Right ventricle myocardium superior (tissue), 1 donor: ENCODE measurements at regions of chr5 and their contacts with region 1.

Region 1: DNA sequence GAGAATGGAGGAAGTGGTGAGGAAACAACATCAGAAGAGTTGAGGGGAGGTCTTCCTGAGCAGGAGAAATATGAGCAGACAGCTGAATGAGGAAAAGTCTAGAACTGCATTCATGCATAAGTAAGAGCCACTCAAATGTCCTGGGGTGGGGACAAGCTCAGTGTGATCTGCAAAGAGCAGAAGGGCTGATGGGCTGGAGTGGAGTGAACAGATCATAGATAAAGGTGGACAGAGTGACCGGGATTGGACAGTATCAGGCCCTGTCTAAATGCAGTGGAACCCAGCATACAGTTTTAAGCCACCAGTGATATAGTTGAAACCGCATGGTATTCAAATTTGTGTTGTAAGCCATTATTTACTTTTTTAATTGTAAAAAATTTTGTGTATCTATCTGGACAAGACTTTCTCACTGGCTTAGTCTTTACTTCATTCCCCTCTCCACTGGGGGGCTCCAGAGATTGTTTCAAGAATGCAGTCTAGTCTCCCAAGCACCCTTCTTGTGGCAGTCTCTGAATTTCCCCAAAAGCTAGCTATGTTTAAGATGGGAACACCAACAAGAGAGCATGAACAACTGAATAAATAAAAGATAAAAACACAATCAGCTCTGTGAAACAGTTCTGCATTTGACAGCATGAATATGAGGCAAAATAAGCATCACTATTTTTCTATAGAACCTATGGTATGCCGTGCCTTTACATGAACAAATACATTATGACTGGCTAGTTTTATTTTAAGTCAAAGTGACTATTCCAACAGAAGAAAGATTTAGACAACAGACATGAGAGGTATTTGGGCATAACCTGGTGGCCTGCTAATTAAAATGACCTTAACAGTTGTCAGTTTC is 10.7 kb upstream of the STK32A start:
- DNase-seq: no peak
- ATAC-seq: peak; percentile 85

Region 2: GRCh38 chr5:147369742-147370374 is 145.7 kb after region 1 on chr5:
- intact Hi-C with region 1: loop called (anchors 2 kb)
- DNase-seq: no peak
- ATAC-seq: peak; percentile 60

Region 3: DNA sequence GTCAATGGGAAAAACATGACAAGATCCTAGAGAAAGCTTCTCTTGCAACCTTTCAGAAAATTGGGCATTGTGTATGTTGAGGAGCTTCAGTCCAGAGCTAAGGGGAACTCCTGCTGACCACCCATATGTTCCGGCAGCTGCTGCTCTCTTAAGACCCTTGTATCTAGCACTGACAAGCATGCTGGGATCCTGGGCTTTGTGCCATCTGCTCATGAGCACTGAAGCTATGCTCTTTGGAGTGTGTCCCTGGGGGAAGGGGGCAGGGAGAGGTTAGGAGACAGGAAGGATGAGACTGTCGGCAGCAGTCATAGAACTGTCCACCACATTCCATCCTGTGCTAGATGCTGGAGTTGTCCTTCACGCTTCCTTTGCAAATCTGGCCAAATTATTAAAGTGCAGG is 449.1 kb after region 1 on chr5:
- intact Hi-C with region 1: no loop called
- DNase-seq: no peak
- ATAC-seq: no peak